ENCODE measurements at regions of chr16 and their contacts with region 1.

Region 1: DNA sequence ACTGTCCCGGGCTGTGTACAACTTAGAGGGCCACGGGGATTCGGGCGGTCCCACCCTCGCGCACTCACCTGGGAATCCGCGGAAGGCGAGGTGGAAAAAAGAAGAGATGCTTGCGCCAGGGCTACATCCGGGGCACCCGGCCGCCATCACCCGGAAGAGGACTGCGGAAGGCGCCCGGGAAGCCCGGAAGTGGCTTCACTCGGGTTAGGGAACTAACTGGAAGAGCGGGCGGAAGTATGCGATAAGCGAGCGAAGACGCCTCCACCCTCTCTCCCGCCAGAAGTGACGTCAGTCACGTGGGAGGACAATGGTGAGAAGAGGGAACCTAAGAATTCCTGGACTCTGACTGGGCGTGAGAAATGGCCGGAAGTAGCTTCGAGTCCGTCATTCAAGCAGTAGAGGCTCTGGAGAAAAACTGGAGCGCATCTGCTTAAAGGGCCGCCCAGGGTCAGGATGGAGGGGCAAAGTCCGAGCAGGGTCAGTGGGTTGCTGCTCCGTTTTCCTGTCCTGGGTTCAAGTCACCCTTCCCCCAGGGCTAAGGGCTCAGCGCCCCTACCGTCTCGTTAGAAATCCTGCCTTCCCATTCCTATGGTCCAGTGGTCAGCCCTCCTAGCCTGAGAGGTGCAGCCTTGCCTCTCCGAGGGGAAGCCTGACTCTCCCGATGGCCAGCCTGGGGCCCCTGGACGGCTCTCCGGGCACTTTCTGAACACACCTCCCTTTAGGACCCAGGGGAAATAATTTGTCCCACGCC is at the start of gene CD2BP2:
- DNase-seq: peak; percentile 79 to 93 (median 84)
- ATAC-seq: peak; percentile 92 to 94
- H3K4me3 Mint-ChIP-seq: peak within 1 kb of the TSS; percentile 89 to 99 (median 95)
- H3K27ac Mint-ChIP-seq: peak within 1 kb of the TSS; percentile 95 to 99 (median 98)
- H3K4me1 Mint-ChIP-seq: peaks cover 22 to 47% (median 37%) of the 10 kb centered on the region in 4 donors
- H3K27me3 Mint-ChIP-seq: no peaks in the 10 kb centered on the region
- polyA plus RNA-seq, gene CD2BP2: 20.6 to 21.9 (median 21.7) TPM

Region 2: GRCh38 chr16:30335598-30336474 is 19.5 kb before region 1 on chr16:
- POLR2A ChIA-PET with region 1: interaction called, 21 read pairs
- DNase-seq: peak in 3 of 10 donors; percentile 23 to 72 (median 45)
- ATAC-seq: peak in 1 of 2 donors; percentile 22
- H3K4me3 Mint-ChIP-seq: peak overlapping the region; percentile 83 to 94 (median 86)
- H3K27ac Mint-ChIP-seq: peak overlapping the region in 9 of 10 donors; percentile 66 to 95 (median 90)
- H3K4me1 Mint-ChIP-seq: peaks cover 7 to 46% (median 31%) of the 10 kb centered on the region in 4 donors
- H3K27me3 Mint-ChIP-seq: no peaks in the 10 kb centered on the region

Measured in naive thymus-derived CD8-positive, alpha-beta T cell (primary cell).